ENCODE measurements at regions of chr2 and their contacts with region 1.

Region 1: GRCh38 chr2:174510583-174511189 is 23.9 kb upstream of the GPR155 start:
- DNase-seq: no peak
- ATAC-seq: no peak
- H3K4me3 ChIP-seq: no peak overlapping the region
- H3K27ac ChIP-seq: no peak overlapping the region
- H3K4me1 ChIP-seq: no peaks in the 10 kb centered on the region
- H3K27me3 ChIP-seq: no peaks in the 10 kb centered on the region
- CTCF ChIP-seq: no peak

Region 2: DNA sequence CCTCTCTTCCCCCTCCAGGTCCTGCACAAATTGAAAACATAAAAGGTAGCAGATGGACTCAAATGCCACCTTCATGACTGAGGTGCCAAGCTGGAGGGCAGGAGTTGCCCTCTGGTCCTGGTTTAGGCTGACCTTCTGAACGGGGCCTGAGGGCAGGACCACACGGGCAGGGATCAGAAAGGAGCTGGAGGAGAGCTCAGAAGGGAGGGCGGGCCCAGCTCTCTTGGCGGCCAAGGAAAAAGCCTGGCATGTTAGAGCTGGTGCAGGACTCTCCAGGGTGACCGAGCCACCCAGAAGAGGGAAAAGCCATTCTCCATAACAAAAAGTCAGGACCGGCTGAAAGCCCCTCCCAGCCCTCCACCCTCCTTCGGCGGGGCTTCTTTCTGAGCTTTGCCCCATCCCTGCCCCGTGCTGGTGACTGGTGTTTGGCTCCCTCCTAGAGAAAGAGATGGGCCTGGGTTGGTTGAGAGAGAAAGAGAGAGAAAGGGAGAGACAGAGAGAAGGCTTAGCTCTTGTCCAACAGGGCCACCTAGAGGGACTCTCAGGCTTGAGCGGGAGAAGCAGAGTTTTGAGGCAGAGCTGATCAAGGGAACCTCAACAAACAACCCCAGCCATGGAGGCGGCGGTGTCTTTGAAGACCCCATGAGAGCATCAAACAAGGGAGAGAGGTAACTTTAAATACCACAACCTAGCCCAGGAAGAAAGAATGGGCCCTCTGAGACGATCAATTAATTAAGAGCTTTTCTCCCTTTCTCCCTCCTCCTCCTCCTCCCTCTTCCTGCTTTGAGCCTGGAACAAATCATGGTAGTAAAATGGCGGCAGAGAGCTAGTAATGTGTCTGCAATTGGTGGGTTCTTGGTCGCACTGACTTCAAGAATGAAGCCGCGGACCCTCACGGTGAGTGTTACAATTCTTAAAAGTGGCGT is 36.2 kb after region 1 on chr2:
- CTCF ChIA-PET with region 1: no interaction called
- POLR2A ChIA-PET with region 1: no interaction called
- in situ Hi-C with region 1: no loop called
- intact Hi-C with region 1: no loop called
- DNase-seq: no peak
- ATAC-seq: peak; percentile 84
- H3K4me3 ChIP-seq: no peak overlapping the region
- H3K27ac ChIP-seq: no peak overlapping the region
- H3K4me1 ChIP-seq: no peaks in the 10 kb centered on the region
- H3K27me3 ChIP-seq: no peaks in the 10 kb centered on the region
- CTCF ChIP-seq: peak; percentile 68

Region 3: DNA sequence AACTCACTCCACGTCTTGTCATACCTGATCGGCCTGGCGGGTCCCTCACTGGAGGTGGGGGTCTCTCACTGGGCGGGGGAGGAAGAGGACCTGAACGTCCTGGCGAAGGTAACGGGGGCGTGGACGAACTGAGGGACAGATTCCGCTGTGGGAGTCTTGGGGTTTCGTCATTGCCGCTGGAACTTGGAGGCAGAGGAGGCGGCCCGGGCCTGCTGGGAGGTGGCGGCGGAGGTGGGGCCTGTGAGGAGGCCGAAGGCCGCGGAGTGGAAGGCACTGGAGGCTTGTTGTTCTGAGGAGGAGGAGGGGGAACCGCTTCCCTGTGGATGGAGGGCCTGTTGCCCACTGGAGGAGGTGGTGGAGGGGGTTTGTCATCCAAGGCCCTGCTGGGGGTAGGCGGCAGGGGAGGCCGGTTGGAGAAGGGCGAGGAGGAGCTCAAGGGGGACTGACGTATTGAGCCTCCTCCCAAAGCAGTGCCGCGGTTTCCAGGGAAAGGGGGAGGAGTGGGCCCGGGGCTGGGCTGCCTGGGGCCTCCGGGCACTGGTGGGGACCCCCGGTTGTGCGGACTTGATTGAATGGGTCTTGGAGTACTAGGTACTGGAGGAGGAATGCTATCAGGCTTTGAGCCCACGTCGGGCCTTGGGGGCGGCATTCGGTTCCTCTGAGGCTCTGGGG is 61.1 kb after region 1 on chr2:
- CTCF ChIA-PET with region 1: no interaction called
- POLR2A ChIA-PET with region 1: interaction called, 10 read pairs
- in situ Hi-C with region 1: no loop called
- intact Hi-C with region 1: no loop called
- DNase-seq: no peak
- ATAC-seq: no peak
- H3K4me3 ChIP-seq: no peak overlapping the region
- H3K27ac ChIP-seq: no peak overlapping the region
- H3K4me1 ChIP-seq: no peaks in the 10 kb centered on the region
- H3K27me3 ChIP-seq: no peaks in the 10 kb centered on the region
- CTCF ChIP-seq: no peak

Region 4: GRCh38 chr2:174654419-174654941 is 143.8 kb after region 1 on chr2:
- CTCF ChIA-PET with region 1: no interaction called
- POLR2A ChIA-PET with region 1: no interaction called
- in situ Hi-C with region 1: no loop called
- intact Hi-C with region 1: no loop called
- DNase-seq: no peak
- ATAC-seq: no peak
- H3K4me3 ChIP-seq: no peak overlapping the region
- H3K27ac ChIP-seq: no peak overlapping the region
- H3K4me1 ChIP-seq: no peaks in the 10 kb centered on the region
- H3K27me3 ChIP-seq: no peaks in the 10 kb centered on the region
- CTCF ChIP-seq: no peak